A673 (cell line): ENCODE measurements at regions of chr4 and their contacts with region 1.

Region 1: GRCh38 chr4:53015681-53016080 is 153.6 kb downstream of the RASL11B start:
- DNase-seq: peak; percentile 32
- H3K4me3 ChIP-seq: no peak overlapping the region
- H3K27ac ChIP-seq: no peak overlapping the region
- H3K4me1 ChIP-seq: peaks cover 27% of the 10 kb centered on the region
- H3K27me3 ChIP-seq: no peaks in the 10 kb centered on the region
- CTCF ChIP-seq: peak; percentile 62

Region 2: GRCh38 chr4:53089936-53090729 is 74.5 kb after region 1 on chr4:
- CTCF ChIA-PET with region 1: no interaction called
- POLR2A ChIA-PET with region 1: no interaction called
- intact Hi-C with region 1: no loop called
- DNase-seq: peak; percentile 3
- H3K4me3 ChIP-seq: no peak overlapping the region
- H3K27ac ChIP-seq: no peak overlapping the region
- H3K4me1 ChIP-seq: no peaks in the 10 kb centered on the region
- H3K27me3 ChIP-seq: no peaks in the 10 kb centered on the region
- CTCF ChIP-seq: no peak

Region 3: DNA sequence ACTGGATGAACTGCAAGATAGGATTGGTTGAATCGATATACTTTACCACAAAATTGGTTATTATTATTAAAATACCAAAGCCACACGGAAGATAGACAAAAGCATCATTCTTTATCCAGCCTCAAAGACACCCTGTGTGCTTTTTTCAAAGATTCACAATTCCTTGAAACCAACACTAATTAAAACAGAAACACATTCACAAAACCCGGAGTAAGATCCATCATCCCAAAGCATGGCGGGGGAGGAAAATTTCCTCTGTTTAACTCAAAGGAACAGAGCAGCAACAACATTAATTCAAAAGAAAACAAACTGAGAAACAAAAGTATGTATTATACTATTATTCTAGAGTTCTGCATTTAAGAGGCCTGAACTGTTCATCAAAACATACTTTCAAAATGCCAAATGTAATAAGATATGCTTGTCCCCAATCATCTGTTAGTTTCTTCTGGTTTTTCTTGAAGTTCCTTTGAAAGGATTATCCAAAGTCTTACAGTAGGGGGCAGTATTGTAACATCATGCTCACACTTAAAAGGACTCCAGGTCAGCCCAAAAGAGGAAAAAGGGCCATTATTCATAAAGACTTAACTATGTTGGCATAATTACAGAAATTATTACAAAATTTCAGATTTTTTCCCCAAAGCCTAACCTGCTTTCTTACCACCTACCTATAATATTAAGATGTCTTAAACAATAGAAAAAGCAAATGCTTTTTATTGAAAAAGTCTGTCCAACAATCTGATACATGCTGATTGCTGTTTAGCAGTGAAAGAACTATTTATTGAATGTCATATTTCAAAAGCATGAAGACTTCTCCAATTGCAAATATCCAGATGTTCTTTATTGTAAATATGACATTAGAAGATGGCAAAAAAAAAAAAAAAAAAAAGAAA is 181.4 kb after region 1 on chr4:
- CTCF ChIA-PET with region 1: no interaction called
- POLR2A ChIA-PET with region 1: no interaction called
- intact Hi-C with region 1: loop called (anchors 2 kb)
- DNase-seq: peak; percentile 77
- H3K4me3 ChIP-seq: peak overlapping the region; percentile 18
- H3K27ac ChIP-seq: no peak overlapping the region
- H3K4me1 ChIP-seq: peaks cover 9% of the 10 kb centered on the region
- H3K27me3 ChIP-seq: peaks cover 32% of the 10 kb centered on the region
- CTCF ChIP-seq: peak; percentile 61

Region 4: DNA sequence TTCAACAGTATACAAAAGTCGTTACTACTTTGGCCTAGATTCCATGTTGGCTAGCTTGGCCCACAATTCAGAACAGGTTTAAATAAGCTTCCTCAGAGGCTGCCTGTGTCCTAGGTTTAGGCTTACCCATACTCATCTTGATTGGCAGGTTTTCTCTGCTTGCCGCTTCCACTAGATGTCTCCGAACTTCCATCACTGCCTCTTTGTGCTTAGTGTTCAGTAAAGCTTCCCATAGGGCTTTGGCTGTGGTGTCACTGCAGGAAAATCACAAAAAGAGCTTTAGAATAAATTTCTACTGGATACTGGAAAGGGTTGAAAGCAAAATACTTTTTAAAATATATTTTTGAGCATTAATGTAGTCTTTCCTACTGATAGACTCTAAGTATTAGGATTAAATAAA is 297.8 kb after region 1 on chr4:
- CTCF ChIA-PET with region 1: no interaction called
- POLR2A ChIA-PET with region 1: no interaction called
- intact Hi-C with region 1: loop called (anchors 10 kb)
- DNase-seq: peak; percentile 60
- H3K4me3 ChIP-seq: no peak overlapping the region
- H3K27ac ChIP-seq: no peak overlapping the region
- H3K4me1 ChIP-seq: peaks cover 17% of the 10 kb centered on the region
- H3K27me3 ChIP-seq: no peaks in the 10 kb centered on the region
- CTCF ChIP-seq: peak; percentile 54

Region 5: DNA sequence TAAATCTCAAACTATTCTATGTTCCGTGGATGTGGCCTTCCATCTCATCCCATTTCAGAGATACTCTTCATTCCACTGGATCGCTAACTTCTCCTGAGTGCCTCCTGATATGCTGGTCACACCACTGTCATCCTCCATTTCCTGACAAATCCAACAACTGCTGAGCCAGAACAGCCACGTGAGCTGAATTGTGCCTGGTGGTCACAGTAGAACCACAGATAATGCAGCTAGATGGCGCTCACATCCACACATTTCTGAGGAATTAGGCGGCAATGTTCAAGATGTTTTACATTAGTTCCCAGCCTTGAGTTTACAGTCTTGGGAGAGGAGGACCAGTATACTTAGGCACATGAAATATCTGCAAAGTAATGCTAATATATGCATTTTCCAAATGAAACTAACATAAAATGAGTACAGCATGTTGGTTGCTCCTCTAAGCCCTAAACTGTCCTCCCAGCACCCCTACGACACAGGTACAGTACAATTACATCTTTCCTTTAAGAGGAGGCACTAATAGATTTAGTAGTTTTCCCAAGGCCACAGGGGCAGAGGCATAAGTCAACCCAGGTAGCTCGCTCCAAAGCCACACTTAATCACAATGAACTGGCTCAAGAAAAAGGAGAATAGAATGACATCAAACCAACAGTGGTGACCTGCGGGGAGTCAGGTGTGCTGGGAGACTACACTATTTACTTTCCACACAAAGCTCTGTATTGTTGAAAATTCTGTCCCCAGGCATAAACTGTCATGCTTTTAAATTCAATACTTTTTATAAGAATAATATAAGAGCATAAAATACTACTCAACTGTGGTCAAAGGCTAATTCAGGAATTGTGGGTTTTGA is 914.5 kb after region 1 on chr4:
- CTCF ChIA-PET with region 1: no interaction called
- POLR2A ChIA-PET with region 1: no interaction called
- intact Hi-C with region 1: loop called (anchors 10 kb)
- DNase-seq: peak; percentile 64
- H3K4me3 ChIP-seq: no peak overlapping the region
- H3K27ac ChIP-seq: no peak overlapping the region
- H3K4me1 ChIP-seq: no peaks in the 10 kb centered on the region
- H3K27me3 ChIP-seq: peaks cover 7% of the 10 kb centered on the region
- CTCF ChIP-seq: peak; percentile 67

Region 6: GRCh38 chr4:54228056-54228527 is 1212.4 kb after region 1 on chr4:
- CTCF ChIA-PET with region 1: interaction called, 3 read pairs
- POLR2A ChIA-PET with region 1: no interaction called
- intact Hi-C with region 1: loop called (anchors 2 kb)
- DNase-seq: peak; percentile 37
- H3K4me3 ChIP-seq: no peak overlapping the region
- H3K27ac ChIP-seq: no peak overlapping the region
- H3K4me1 ChIP-seq: no peaks in the 10 kb centered on the region
- H3K27me3 ChIP-seq: peaks cover 82% of the 10 kb centered on the region
- CTCF ChIP-seq: peak; percentile 61